Activated CD4-positive, alpha-beta T cell treated with anti-CD3 and anti-CD28 coated beads, Interleukin-2, amount 10 ng/mL, durations not matched to agents 7 days and 5 days (primary cell): ENCODE measurements at regions of chr15 and their contacts with region 1.

Region 1: DNA sequence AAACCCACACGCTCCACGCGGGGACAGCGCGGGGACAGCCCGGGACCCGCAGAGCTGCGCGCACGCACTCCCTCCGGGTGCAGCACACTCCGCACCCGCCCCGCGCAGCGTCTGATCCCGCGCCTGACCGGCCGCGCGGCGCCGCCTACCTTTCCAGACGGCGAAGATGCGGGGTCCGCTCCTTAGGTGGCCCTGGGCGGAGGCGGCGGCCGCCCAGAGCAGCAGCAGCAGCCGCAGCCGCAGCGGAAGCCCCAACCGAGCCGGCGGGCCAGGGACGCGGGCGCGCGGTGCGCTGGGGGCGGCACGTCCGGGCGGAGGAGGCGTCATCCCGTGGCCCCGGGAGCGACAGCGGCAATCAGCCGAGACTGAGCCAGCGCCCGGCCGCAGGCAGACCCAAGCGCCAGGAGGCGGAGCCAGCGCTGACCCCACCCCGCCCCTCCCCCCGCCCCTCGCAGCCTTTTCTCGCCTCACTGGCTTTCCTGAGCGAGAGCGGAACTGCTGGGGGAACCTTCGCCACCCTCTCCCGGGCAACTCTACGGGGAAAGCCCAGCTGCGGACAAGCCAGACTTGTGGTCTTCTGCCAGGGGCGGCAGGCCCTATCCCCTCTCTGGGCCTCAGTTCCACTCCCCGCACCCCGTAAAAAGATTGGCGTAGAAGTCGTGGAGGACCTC is at the start of gene SEMA7A:
- DNase-seq: peak; percentile 79
- H3K4me3 Mint-ChIP-seq: peak within 1 kb of the TSS; percentile 73
- H3K27ac Mint-ChIP-seq: peak within 1 kb of the TSS; percentile 76
- H3K4me1 Mint-ChIP-seq: peaks cover 46% of the 10 kb centered on the region
- H3K27me3 Mint-ChIP-seq: peaks cover 4% of the 10 kb centered on the region
- total RNA-seq, gene SEMA7A: 2.7 to 3.5 TPM

Region 2: DNA sequence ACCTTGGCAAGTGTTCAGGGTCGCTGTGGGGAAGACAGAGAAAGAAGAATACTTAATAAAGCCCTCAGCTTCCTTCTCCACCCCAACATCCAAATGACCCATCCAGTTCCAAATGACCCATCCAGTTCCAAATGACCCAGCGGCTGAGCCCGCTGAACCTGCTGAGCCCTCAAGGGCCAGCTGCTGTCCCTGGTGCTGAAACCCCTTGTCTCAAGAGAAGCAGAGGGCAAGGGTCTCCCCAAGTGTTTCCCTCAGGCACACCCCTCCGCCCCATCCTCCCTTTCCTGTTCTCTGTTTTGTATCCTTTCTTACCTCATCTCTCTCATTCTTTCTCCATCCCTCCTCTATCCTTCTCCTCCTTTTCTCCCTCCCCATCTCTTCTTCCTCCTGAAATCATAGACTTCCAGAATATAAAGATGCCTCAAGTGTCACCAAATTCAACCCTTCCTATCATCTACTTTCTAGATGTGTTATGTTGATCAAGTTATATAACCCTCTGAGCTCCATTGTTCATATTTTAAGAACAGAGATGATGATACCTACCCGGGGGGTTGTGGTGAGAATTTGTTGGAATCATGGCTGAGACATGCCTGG is 168.6 kb before region 1 on chr15:
- CTCF ChIA-PET with region 1: no interaction called
- POLR2A ChIA-PET with region 1: no interaction called
- DNase-seq: peak; percentile 35
- H3K4me3 Mint-ChIP-seq: no peak overlapping the region
- H3K27ac Mint-ChIP-seq: no peak overlapping the region
- H3K4me1 Mint-ChIP-seq: no peaks in the 10 kb centered on the region
- H3K27me3 Mint-ChIP-seq: peaks cover 9% of the 10 kb centered on the region

Region 3: GRCh38 chr15:74365611-74366440 is 67.9 kb before region 1 on chr15:
- CTCF ChIA-PET with region 1: no interaction called
- POLR2A ChIA-PET with region 1: no interaction called
- DNase-seq: no peak
- H3K4me3 Mint-ChIP-seq: peak overlapping the region; percentile 38
- H3K27ac Mint-ChIP-seq: no peak overlapping the region
- H3K4me1 Mint-ChIP-seq: peaks cover 3% of the 10 kb centered on the region
- H3K27me3 Mint-ChIP-seq: peaks cover 80% of the 10 kb centered on the region

Region 4: GRCh38 chr15:74402873-74403587 is 30.7 kb before region 1 on chr15:
- CTCF ChIA-PET with region 1: interaction called, 12 read pairs
- POLR2A ChIA-PET with region 1: interaction called, 7 read pairs
- DNase-seq: peak; percentile 72
- H3K4me3 Mint-ChIP-seq: peak overlapping the region; percentile 37
- H3K27ac Mint-ChIP-seq: peak overlapping the region; percentile 90
- H3K4me1 Mint-ChIP-seq: peaks cover 63% of the 10 kb centered on the region
- H3K27me3 Mint-ChIP-seq: no peaks in the 10 kb centered on the region

Region 5: GRCh38 chr15:74422650-74423430 is 10.9 kb before region 1 on chr15:
- CTCF ChIA-PET with region 1: interaction called, 11 read pairs
- POLR2A ChIA-PET with region 1: no interaction called
- DNase-seq: no peak
- H3K4me3 Mint-ChIP-seq: no peak overlapping the region
- H3K27ac Mint-ChIP-seq: peak overlapping the region; percentile 46
- H3K4me1 Mint-ChIP-seq: peaks cover 18% of the 10 kb centered on the region
- H3K27me3 Mint-ChIP-seq: no peaks in the 10 kb centered on the region

Region 6: DNA sequence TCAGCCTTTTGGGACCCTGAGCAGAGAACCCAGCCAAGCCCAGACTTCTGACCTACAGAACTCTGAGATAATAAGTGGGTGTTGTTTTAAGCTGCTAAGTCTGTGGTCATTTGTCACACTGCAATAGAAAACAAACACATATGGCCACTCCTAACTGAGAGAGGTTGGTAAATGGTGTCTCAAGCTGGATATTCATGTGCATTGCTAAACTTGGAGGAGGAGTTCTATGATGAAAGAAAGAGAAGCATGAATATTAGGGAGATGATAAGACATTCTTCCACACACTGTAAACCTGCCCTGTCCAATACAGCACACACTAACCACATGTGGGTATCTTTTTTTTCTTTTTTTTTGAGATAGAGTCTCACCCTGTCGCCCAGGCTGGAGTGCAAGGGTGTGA is 55.0 kb after region 1 on chr15:
- CTCF ChIA-PET with region 1: no interaction called
- POLR2A ChIA-PET with region 1: no interaction called
- DNase-seq: no peak
- H3K4me3 Mint-ChIP-seq: no peak overlapping the region
- H3K27ac Mint-ChIP-seq: peak overlapping the region; percentile 58
- H3K4me1 Mint-ChIP-seq: peaks cover 23% of the 10 kb centered on the region
- H3K27me3 Mint-ChIP-seq: no peaks in the 10 kb centered on the region

Region 7: DNA sequence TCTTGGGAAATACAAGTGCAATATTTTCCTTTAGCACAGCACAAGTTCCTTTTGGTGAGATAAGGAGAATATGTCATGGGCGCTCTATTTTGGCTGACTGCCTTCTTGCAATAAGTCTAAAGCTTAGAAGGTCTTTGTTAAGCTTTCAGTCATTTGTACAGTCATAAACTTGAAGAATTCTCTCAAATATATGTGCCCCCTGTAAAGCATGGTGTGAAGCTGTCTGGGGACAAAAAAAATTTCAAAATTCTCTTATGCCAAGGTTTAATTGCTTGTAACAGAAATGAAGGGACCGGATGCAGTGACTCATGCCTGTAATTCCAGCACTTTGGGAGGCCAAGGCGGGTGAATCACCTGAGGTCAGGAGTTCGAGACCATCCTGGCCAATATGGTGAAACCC is 85.6 kb after region 1 on chr15:
- CTCF ChIA-PET with region 1: no interaction called
- POLR2A ChIA-PET with region 1: no interaction called
- DNase-seq: no peak
- H3K4me3 Mint-ChIP-seq: no peak overlapping the region
- H3K27ac Mint-ChIP-seq: no peak overlapping the region
- H3K4me1 Mint-ChIP-seq: no peaks in the 10 kb centered on the region
- H3K27me3 Mint-ChIP-seq: no peaks in the 10 kb centered on the region